Calu3 (cell line): ENCODE measurements at regions of chr5 and their contacts with region 1.

Region 1: DNA sequence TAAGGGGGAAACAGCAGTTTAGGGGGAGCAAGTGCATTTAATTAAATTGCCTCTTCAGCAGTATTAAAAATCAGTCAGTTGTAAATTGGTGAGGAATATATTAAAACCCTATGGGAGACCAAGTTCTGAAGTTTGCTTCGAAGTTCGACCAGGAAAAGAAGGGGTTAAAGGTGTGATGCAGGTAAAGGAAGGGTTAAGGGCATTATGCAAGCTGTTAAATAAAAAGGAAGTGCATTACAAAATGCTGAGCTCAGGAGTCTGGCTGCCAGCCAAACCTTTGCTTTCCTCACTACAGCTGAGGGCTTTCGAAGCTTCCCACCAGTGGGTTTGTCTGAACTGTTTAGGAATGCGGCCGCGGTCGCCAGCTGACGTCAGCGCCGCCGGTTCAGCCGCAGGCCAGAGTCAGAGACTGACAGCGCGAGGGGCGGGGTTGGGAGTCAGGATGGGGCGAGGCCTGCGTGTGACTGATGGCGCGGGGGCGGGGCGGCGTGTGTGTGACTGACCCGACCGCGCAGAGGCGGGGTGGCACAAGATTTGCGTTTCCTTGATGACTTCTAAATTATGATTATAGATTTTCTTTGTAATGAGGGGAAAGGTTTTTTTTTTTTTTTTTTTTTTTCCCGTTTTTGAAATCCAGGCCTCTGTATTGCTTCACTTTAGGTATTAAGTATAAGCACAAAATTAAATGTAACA is 76.6 kb downstream of the ZSWIM6 start:
- DNase-seq: peak; percentile 99
- H3K4me3 Mint-ChIP-seq: peak overlapping the region; percentile 64
- H3K27ac Mint-ChIP-seq: peak overlapping the region; percentile 65
- H3K4me1 Mint-ChIP-seq: peaks cover 23% of the 10 kb centered on the region
- H3K27me3 Mint-ChIP-seq: no peaks in the 10 kb centered on the region
- CTCF ChIP-seq: no peak

Region 2: DNA sequence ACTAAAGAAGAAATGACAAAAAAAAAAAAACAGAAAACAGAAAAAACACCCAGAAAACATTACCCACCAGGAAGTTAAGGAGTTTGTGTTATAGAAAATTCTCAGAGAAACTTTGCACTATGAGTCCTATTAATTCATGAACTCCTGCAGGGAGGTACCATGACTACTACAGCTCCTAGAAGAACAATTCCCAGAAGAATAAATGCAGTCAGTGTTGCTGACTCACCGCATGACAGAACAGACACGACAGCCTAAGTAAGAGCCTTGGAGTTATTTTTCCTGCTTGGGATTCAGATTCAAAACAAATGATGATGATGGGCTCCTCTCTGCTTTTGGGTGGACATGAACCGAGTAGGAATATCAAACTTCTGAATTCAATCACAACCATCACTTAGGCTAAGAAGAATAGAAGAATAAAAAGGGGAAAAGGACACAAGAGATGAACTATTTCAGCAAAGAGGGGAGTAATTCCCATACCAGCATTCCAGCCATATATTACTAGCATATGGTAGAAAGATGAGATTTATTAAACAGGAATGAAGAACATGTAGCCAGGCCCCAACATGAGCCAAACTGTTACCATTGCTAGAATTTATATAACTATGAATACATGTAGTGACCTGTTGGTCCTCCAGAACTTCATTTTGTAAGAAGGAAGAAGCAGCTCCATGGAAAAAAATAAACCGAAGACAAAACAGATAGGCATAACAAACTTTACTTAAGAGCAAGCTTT is 1305.5 kb before region 1 on chr5:
- CTCF ChIA-PET with region 1: interaction called, 10 read pairs
- intact Hi-C with region 1: no loop called
- DNase-seq: no peak
- H3K4me3 Mint-ChIP-seq: no peak overlapping the region
- H3K27ac Mint-ChIP-seq: no peak overlapping the region
- H3K4me1 Mint-ChIP-seq: no peaks in the 10 kb centered on the region
- H3K27me3 Mint-ChIP-seq: no peaks in the 10 kb centered on the region
- CTCF ChIP-seq: no peak

Region 3: DNA sequence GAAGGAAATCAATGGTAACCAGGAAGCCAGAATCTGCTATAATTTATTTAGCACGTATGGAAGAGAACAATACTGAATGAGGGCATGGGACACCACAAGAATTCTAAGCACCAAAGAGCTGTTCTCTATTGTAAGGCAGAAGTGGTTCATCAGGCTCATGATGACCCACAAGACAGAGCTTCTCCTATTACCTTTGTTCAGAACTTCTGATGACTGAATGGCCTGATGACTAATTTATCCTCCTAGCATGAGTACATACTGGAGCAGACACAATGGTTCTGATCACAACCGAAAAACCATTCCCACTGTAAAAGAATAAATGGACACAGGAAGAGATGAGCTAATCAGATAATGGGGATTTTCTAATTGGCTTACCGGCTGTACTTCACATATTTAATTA is 1185.3 kb before region 1 on chr5:
- CTCF ChIA-PET with region 1: no interaction called
- intact Hi-C with region 1: no loop called
- DNase-seq: no peak
- H3K4me3 Mint-ChIP-seq: no peak overlapping the region
- H3K27ac Mint-ChIP-seq: no peak overlapping the region
- H3K4me1 Mint-ChIP-seq: no peaks in the 10 kb centered on the region
- H3K27me3 Mint-ChIP-seq: peaks cover 8% of the 10 kb centered on the region
- CTCF ChIP-seq: no peak

Region 4: GRCh38 chr5:61449804-61450492 is 41.3 kb after region 1 on chr5:
- CTCF ChIA-PET with region 1: interaction called, 27 read pairs
- intact Hi-C with region 1: no loop called
- DNase-seq: peak; percentile 30
- H3K4me3 Mint-ChIP-seq: peak overlapping the region; percentile 59
- H3K27ac Mint-ChIP-seq: peak overlapping the region; percentile 98
- H3K4me1 Mint-ChIP-seq: peaks cover 12% of the 10 kb centered on the region
- H3K27me3 Mint-ChIP-seq: no peaks in the 10 kb centered on the region
- CTCF ChIP-seq: no peak